PC-3 (cell line): ENCODE measurements at regions of chr22 and their contacts with region 1.

Region 1: DNA sequence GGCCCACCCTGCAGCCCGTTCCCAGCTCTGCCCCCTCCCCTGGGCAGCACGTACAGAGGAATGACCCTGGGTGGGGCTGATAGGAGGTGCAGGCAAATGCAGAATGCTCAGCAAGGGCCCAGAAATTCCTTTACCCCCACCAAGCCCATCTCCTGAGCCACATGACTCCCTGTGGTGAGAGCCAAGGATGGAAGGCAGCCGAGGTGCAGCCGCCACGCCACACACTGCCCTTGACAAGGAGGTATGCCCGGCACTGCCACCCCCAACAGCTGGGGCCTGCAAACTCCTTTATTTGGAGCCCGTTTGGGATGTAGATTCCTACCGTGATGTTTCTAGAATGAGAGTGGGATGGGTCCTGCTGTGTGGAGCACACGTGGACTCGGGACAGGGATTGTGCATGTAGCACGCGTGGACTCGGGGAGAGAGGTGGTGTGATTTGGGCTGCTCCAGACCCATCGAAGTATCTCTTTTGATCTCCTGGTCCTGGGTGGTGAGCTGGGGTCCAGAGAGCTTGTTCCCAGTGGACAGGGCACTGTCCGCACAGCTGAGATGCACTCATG is 12.9 kb downstream of the GTSE1 start:
- DNase-seq: no peak
- ATAC-seq: no peak
- H3K4me3 ChIP-seq: no peak overlapping the region
- H3K27ac ChIP-seq: no peak overlapping the region
- H3K4me1 ChIP-seq: no peaks in the 10 kb centered on the region
- H3K27me3 ChIP-seq: no peaks in the 10 kb centered on the region
- CTCF ChIP-seq: no peak

Region 2: DNA sequence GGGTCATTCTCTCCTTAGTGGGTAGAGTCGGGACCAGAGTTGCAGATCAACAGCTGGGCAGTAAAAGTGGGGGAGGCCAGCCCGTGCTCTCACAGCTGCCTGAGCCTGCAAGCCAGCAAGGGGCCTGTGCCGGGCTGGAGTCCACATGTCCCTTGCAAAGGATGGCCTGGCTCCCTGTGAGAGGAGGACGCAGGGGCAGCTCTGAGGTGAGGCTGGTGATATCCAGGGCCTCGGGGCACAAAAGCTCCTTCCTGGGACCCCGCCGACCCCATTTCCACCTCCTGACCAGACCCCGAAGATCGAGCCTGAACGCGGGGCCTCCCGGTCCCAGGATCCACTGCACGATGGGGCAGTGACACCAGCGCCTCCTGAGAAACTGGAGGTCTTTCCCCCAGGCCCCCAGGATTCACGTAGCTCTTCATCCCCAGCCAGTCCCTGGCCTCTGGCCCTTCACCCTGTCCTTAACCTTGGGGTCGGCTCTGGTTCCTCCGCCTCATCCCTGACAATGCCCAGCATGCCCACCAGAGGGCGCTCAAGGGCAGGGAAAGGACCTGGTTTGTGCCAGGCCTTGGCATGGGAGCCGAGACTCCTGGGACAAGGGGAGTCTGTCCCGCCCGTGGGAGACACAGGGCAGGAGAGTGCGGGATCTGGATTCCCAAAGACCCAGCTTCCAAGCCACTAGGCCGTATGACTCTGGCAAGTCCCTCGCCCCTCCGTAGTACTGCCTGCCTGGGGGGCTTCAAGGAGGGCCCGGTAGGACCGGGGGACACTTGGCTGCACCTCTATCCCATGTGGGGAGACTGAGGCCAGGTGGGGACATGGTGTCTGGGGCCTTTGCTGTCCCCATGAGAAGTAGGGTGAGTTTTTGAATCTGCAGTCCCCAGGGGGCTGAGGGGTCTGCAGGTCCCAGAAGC is 314.9 kb before region 1 on chr22:
- CTCF ChIA-PET with region 1: no interaction called
- POLR2A ChIA-PET with region 1: no interaction called
- intact Hi-C with region 1: loop called (anchors 10 kb)
- DNase-seq: peak; percentile 77
- ATAC-seq: peak; percentile 67
- H3K4me3 ChIP-seq: no peak overlapping the region
- H3K27ac ChIP-seq: no peak overlapping the region
- H3K4me1 ChIP-seq: peaks cover 17% of the 10 kb centered on the region
- H3K27me3 ChIP-seq: no peaks in the 10 kb centered on the region
- CTCF ChIP-seq: peak; percentile 89

Region 3: DNA sequence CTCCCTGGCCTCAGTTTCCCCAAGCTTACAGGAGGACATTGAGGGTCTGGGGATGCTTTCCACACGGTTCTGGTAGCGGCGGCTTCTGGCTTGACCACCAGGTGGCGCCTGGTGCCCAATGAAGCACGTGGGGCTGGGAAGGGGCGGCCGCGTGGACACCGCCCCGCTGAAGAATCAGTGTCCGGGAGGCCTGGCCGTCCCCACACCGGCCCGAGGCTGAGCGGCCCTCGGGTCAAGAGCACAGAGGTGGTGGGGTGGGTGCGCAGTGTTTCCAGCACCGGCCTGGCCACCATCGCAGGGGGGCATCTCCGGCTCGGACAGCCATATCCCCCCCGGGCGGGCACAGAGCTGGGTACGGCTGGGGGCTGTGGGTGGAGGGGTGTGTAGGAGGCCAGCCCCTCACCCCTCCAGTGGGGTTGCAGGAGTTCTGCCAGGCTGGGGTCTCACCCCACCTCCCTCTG is 187.1 kb before region 1 on chr22:
- CTCF ChIA-PET with region 1: no interaction called
- POLR2A ChIA-PET with region 1: no interaction called
- intact Hi-C with region 1: loop called (anchors 1 kb)
- DNase-seq: peak; percentile 69
- ATAC-seq: peak; percentile 66
- H3K4me3 ChIP-seq: no peak overlapping the region
- H3K27ac ChIP-seq: no peak overlapping the region
- H3K4me1 ChIP-seq: peaks cover 7% of the 10 kb centered on the region; the same call in 1 of the 2 replicates
- H3K27me3 ChIP-seq: no peaks in the 10 kb centered on the region
- CTCF ChIP-seq: peak; percentile 87

Region 4: GRCh38 chr22:46267431-46268279 is 42.0 kb before region 1 on chr22 and contains the start of gene TTC38:
- CTCF ChIA-PET with region 1: no interaction called
- POLR2A ChIA-PET with region 1: no interaction called
- intact Hi-C with region 1: no loop called
- DNase-seq: peak; percentile 81
- ATAC-seq: peak; percentile 89
- H3K4me3 ChIP-seq: peak within 1 kb of the TSS; percentile 85
- H3K27ac ChIP-seq: no peak within 1 kb of the TSS
- H3K4me1 ChIP-seq: peaks cover 10% of the 10 kb centered on the region
- H3K27me3 ChIP-seq: no peaks in the 10 kb centered on the region
- CTCF ChIP-seq: no peak
- total RNA-seq, gene TTC38: 26.8 and 41.4 TPM in 2 replicates

Region 5: DNA sequence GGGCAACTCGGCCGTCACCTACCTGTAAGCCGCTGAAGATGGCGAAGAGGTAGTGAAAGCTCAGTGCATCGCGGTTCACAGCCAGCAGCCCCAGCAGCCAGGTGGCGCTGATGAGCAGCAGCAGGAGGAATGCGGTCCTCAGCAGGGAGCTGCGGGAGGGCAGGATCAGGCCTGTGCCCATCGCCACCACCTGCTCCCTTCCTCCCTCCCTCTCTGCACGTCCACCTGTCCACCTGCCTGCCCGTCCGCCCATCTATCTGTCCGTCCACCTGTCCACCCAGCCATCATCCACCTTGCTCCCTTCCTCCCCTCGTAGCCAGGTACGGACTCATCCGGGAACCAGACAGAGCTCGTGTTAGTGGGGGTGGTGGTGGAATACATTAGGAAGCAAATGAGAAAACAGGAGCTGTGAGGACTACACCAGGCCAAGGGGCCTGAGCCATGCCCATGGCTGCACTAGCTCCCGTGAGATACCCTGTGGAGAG is 58.1 kb after region 1 on chr22:
- CTCF ChIA-PET with region 1: no interaction called
- POLR2A ChIA-PET with region 1: no interaction called
- intact Hi-C with region 1: no loop called
- DNase-seq: peak; percentile 70
- ATAC-seq: peak; percentile 90
- H3K4me3 ChIP-seq: no peak overlapping the region
- H3K27ac ChIP-seq: no peak overlapping the region
- H3K4me1 ChIP-seq: no peaks in the 10 kb centered on the region
- H3K27me3 ChIP-seq: no peaks in the 10 kb centered on the region
- CTCF ChIP-seq: peak; percentile 78

Region 6: DNA sequence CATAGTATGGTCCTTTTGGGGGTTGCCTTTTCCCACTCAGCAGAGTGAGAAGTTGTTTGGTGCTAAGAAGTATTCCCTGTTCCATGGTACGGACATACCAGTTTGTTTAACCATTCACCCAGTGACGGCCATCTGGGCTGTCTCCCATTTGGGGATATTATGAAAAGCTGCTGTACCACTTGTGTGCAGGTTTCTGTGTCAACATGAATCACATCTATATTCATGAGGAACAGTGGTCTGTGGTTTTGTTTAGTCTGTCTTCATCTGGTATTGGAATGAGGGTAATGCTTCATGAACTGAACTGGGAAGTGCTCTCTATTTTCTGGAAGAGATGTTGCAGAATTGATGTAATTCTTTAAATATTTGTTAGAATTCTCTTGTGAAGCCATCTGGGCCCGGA is 115.4 kb after region 1 on chr22:
- CTCF ChIA-PET with region 1: no interaction called
- POLR2A ChIA-PET with region 1: no interaction called
- intact Hi-C with region 1: no loop called
- DNase-seq: peak; percentile 91
- ATAC-seq: peak; percentile 94
- H3K4me3 ChIP-seq: no peak overlapping the region
- H3K27ac ChIP-seq: peak overlapping the region; percentile 38
- H3K4me1 ChIP-seq: peaks cover 18% of the 10 kb centered on the region
- H3K27me3 ChIP-seq: no peaks in the 10 kb centered on the region
- CTCF ChIP-seq: no peak